Head of caudate nucleus (tissue), 42 donors: ENCODE measurements at regions of chr2 and their contacts with region 1.

Region 1: GRCh38 chr2:176821345-176821744 is 391.2 kb upstream of the HNRNPA3 start:
- DNase-seq: no peak

Region 2: GRCh38 chr2:177148477-177149154 is 327.3 kb after region 1 on chr2:
- intact Hi-C with region 1: loop called (anchors 10 kb)
- DNase-seq: peak; percentile 56 to 92 (median 81)